ENCODE measurements at regions of chr2 and their contacts with region 1.

Region 1: GRCh38 chr2:230602562-230603230 is 109.9 kb upstream of the CAB39 start:
- DNase-seq: peak; percentile 49 to 71 (median 62)
- H3K4me3 ChIP-seq: peak overlapping the region; percentile 41 to 44
- H3K4me3 Mint-ChIP-seq: peak overlapping the region; percentile 36 to 85 (median 78)
- H3K27ac ChIP-seq: peak overlapping the region; percentile 59
- H3K27ac Mint-ChIP-seq: peak overlapping the region; percentile 81 to 99 (median 97)
- H3K4me1 ChIP-seq: peaks cover 63% of the 10 kb centered on the region
- H3K4me1 Mint-ChIP-seq: peaks cover 48 to 81% (median 63%) of the 10 kb centered on the region in 4 donors
- H3K27me3 ChIP-seq: no peaks in the 10 kb centered on the region
- H3K27me3 Mint-ChIP-seq: no peaks in the 10 kb centered on the region

Region 2: DNA sequence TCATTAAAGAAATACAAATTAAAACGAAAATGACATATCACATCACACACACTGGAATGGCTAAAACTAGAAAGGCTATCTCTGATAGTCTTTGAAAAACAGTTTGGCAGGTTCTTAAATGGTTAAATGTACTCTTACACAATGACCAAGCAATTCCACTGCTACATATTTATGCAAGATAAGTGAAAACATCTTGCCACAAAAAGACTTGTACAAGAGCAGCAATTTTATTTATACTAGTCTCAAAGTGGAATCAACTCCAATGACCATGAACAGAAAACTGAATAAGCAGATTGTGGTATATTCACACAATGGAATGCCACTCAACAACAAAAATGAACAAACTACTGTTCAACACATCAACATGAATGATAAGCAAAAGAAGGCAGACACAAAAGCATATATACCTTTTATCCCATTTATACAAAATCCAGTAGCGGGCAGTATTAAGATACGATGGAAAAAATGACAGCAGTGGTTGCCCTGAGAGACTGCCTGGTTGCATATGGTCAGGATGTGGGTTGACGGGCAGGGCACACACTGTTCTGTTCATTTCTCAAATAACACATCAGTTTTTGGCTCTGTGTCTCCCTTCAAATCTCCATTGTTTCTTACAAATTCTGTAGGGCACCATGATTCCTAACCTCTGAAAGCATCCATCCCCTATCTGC is 161.3 kb before region 1 on chr2:
- CTCF ChIA-PET with region 1: no interaction called
- POLR2A ChIA-PET with region 1: no interaction called
- intact Hi-C with region 1: loop called (anchors 5 kb)
- DNase-seq: peak; percentile 62 to 82 (median 70)
- H3K4me3 ChIP-seq: no peak overlapping the region
- H3K4me3 Mint-ChIP-seq: peak overlapping the region; percentile 33 to 80 (median 67)
- H3K27ac ChIP-seq: peak overlapping the region; percentile 40
- H3K27ac Mint-ChIP-seq: peak overlapping the region; percentile 33 to 92 (median 89)
- H3K4me1 ChIP-seq: peaks cover 45% of the 10 kb centered on the region
- H3K4me1 Mint-ChIP-seq: peaks cover 39 to 64% (median 47%) of the 10 kb centered on the region in 4 donors
- H3K27me3 ChIP-seq: no peaks in the 10 kb centered on the region
- H3K27me3 Mint-ChIP-seq: no peaks in the 10 kb centered on the region

Region 3: GRCh38 chr2:230525682-230526081 is 77.0 kb before region 1 on chr2:
- CTCF ChIA-PET with region 1: no interaction called
- POLR2A ChIA-PET with region 1: no interaction called
- intact Hi-C with region 1: no loop called
- DNase-seq: peak in 1 of 5 donors; percentile 2
- H3K4me3 ChIP-seq: no peak overlapping the region
- H3K4me3 Mint-ChIP-seq: no peak overlapping the region
- H3K27ac ChIP-seq: no peak overlapping the region
- H3K27ac Mint-ChIP-seq: no peak overlapping the region
- H3K4me1 ChIP-seq: peaks cover 6% of the 10 kb centered on the region
- H3K4me1 Mint-ChIP-seq: peaks cover 0 to 16% (median 4%) of the 10 kb centered on the region in 4 donors
- H3K27me3 ChIP-seq: no peaks in the 10 kb centered on the region
- H3K27me3 Mint-ChIP-seq: no peaks in the 10 kb centered on the region

Measured in CD4-positive, alpha-beta memory T cell (primary cell).